Heart left ventricle (tissue), 16 donors: ENCODE measurements at regions of chr19 and their contacts with region 1.

Region 1: GRCh38 chr19:3984908-3985642 is at the start of gene EEF2:
- DNase-seq: peak; percentile 91 to 95 (median 93)
- ATAC-seq: peak; percentile 48 to 73 (median 67)
- H3K4me3 ChIP-seq: peak within 1 kb of the TSS; percentile 64 to 100 (median 82)
- H3K27ac ChIP-seq: peak within 1 kb of the TSS; percentile 80 to 98 (median 92)
- H3K4me1 ChIP-seq: peaks cover 10 to 66% (median 44%) of the 10 kb centered on the region in 12 donors
- H3K27me3 ChIP-seq: no peaks in the 10 kb centered on the region
- CTCF ChIP-seq: no peak
- POLR2A ChIP-seq: peak; percentile 92 to 100
- total RNA-seq, gene EEF2: 1,373 to 2,686 (median 2,215) TPM

Region 2: DNA sequence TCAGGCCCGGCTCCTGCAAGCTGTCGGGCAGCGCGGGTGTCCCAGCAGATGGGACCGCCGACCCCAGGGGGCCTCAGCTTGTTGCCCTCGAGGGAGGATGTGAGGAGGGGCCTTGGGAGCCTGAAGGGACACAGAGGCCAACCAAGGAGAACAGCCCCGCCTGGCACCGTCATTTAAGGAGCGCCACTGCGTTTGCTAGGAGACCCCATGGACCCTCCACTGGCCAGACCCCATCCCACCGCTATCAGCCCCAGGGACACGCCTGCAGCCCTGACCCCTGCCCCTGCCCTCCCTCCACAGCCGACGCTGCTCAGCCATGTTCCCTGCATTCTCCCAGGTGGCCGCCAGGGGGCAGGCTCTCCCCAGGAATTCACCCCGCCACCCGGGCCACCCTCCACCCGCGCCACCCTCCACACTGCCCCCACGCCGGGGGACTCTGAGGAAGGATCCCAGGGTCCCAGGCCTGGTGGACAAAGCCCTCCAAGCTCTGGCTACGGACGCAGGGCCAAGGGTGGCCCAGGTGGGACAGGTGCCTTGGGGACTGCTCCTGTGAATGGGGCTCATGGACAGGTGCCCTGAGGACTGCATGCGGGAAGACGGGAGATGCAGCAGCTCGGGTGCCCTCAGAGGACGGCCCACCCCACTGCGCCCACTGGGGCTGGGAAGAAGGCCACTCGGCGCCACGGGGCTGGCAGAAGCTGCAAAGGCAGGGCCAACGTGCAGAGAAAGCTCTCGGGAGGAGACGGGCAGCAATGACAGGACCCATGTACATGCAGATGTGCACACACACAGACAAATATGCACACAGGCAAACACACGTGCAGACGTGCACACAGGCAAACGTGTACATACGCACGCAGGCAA is 319.2 kb before region 1 on chr19:
- intact Hi-C with region 1: loop called in 1 of 10 experiments (anchors 5 kb)
- DNase-seq: peak; percentile 65 to 89 (median 69)
- ATAC-seq: peak in 3 of 4 donors; percentile 29 to 58 (median 38)
- H3K4me3 ChIP-seq: no peak overlapping the region
- H3K27ac ChIP-seq: peak overlapping the region in 3 of 12 donors; percentile 1 to 51 (median 42)
- H3K4me1 ChIP-seq: peaks cover 0 to 54% (median 36%) of the 10 kb centered on the region in 12 donors
- H3K27me3 ChIP-seq: no peaks in the 10 kb centered on the region
- CTCF ChIP-seq: peak; percentile 82 to 98 (median 96)
- POLR2A ChIP-seq: no peak

Region 3: DNA sequence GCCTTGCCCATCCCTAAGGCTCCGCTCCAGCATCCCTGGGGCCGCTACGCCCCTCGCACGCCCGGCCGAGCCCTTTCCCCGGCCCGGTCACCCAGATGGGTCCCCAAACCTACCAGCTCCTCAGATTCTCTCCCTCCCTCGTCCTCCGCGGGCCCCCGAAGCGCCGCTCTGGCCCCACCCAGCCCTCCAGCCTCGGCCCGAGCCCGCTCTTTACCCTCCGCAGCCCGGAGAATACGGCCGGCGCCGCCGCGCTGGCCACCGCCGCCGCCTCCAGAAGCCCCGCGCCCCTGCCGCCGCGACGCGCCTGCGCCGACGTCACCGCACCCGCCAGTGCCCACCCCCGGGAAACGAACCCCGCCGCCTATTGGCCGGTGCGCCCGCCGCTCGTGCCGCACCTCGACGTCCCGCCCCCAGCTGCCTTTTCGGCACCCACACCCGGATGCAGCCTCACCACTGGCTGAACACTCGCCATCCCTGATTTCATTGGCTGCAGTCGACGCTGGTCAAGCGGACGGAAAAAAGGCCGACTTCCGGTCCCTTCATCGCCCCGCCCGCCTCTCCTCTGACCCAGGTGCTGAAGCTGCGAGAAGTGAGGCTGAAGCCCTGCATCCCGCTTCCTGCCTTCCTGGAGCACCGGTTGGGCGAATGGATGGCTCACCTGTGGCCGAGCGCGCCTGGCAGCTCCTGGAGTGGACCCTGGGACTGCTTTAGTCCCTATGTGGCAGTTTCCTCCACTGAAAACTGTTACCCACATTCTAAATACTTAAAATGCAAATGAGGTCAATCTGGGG is 14.1 kb before region 1 on chr19 and contains the start of gene DAPK3:
- intact Hi-C with region 1: loop called in 5 of 10 experiments (anchors 2 kb)
- DNase-seq: peak; percentile 98 to 99 (median 99)
- ATAC-seq: peak; percentile 78 to 91 (median 82)
- H3K4me3 ChIP-seq: peak within 1 kb of the TSS; percentile 61 to 100 (median 93)
- H3K27ac ChIP-seq: peak within 1 kb of the TSS; percentile 84 to 100 (median 98)
- H3K4me1 ChIP-seq: peaks cover 17 to 49% (median 43%) of the 10 kb centered on the region in 12 donors
- H3K27me3 ChIP-seq: no peaks in the 10 kb centered on the region
- CTCF ChIP-seq: peak in 4 of 12 donors; percentile 10 to 38 (median 26)
- POLR2A ChIP-seq: peak; percentile 96 to 97
- total RNA-seq, gene DAPK3: 70.6 to 200 (median 97.4) TPM

Region 4: DNA sequence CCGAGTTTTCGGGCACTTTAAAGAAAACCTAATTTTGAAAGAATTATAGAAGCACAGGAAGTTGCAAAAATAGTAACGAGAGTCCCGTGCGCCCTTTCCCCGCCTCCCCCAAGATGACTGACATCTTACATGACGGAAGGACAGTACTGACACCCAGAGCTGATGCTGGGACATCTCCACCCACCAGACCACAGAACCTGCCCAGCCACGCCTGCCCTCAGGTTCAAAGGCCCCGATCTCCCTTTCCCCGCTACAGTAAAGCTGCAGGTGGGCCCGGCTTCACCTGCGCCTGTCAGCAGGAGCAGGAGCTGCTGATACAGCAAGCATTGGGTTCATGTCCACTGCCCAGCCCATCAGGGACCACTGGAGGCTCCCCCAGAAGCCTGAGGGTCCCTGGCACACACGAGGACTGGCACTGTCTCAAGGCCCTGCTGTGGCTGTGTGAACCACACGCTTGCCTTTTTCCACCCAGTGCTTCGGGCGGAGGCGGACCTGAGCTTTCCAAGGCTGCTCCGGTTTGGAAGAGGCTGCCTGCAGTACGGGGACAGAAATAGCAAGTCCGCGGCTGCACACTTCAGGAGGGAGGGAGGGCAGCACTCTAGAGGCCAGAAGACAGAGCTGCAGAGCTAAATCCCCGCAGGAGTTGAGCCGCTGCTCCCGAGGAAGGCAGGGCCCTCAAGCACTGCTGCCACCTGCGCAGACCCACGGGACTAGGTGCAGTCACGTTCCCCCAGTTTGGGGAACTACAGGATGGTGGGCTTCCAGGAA is 130.2 kb after region 1 on chr19:
- intact Hi-C with region 1: loop called in 2 of 10 experiments (anchors 10 kb)
- DNase-seq: peak in 3 of 5 donors; percentile 53 to 71 (median 69)
- ATAC-seq: peak; percentile 61 to 86 (median 82)
- H3K4me3 ChIP-seq: peak overlapping the region in 3 of 12 donors; percentile 15 to 17 (median 16)
- H3K27ac ChIP-seq: peak overlapping the region in 7 of 12 donors; percentile 29 to 79 (median 64)
- H3K4me1 ChIP-seq: peaks cover 2 to 30% (median 19%) of the 10 kb centered on the region in 12 donors
- H3K27me3 ChIP-seq: no peaks in the 10 kb centered on the region
- CTCF ChIP-seq: peak in 3 of 12 donors; percentile 10 to 21 (median 15)
- POLR2A ChIP-seq: no peak

Region 5: GRCh38 chr19:4139614-4140236 is 154.7 kb after region 1 on chr19:
- intact Hi-C with region 1: loop called in 2 of 10 experiments (anchors 5 to 10 kb)
- DNase-seq: peak; percentile 58 to 92 (median 76)
- ATAC-seq: peak in 3 of 4 donors; percentile 75 to 88 (median 81)
- H3K4me3 ChIP-seq: no peak overlapping the region
- H3K27ac ChIP-seq: no peak overlapping the region
- H3K4me1 ChIP-seq: peaks cover 0 to 6% (median 0%) of the 10 kb centered on the region in 12 donors
- H3K27me3 ChIP-seq: no peaks in the 10 kb centered on the region
- CTCF ChIP-seq: peak; percentile 60 to 88 (median 70)
- POLR2A ChIP-seq: no peak

Region 6: GRCh38 chr19:4199699-4200293 is 214.7 kb after region 1 on chr19:
- intact Hi-C with region 1: loop called in 6 of 10 experiments (anchors 2 to 10 kb)
- DNase-seq: no peak
- ATAC-seq: no peak
- H3K4me3 ChIP-seq: no peak overlapping the region
- H3K27ac ChIP-seq: no peak overlapping the region
- H3K4me1 ChIP-seq: peaks cover 0 to 11% (median 0%) of the 10 kb centered on the region in 12 donors
- H3K27me3 ChIP-seq: peaks cover 22 to 54% (median 44%) of the 10 kb centered on the region in 9 donors
- CTCF ChIP-seq: no peak
- POLR2A ChIP-seq: no peak